Activated naive CD4-positive, alpha-beta T cell treated with anti-CD3 and anti-CD28 coated beads for 36 hours (primary cell): ENCODE measurements at regions of chr16 and their contacts with region 1.

Region 1: GRCh38 chr16:1826691-1827575 is at the starts of genes FAHD1 and HAGH:
- DNase-seq: peak; percentile 92
- H3K4me3 Mint-ChIP-seq: peak within 1 kb of the TSS; percentile 91
- H3K27ac Mint-ChIP-seq: peak within 1 kb of the TSS; percentile 78
- H3K4me1 Mint-ChIP-seq: peaks cover 50% of the 10 kb centered on the region
- H3K27me3 Mint-ChIP-seq: no peaks in the 10 kb centered on the region
- total RNA-seq, gene FAHD1: 6.0 to 7.3 TPM
- total RNA-seq, gene HAGH: 29.9 to 30.1 TPM

Region 2: DNA sequence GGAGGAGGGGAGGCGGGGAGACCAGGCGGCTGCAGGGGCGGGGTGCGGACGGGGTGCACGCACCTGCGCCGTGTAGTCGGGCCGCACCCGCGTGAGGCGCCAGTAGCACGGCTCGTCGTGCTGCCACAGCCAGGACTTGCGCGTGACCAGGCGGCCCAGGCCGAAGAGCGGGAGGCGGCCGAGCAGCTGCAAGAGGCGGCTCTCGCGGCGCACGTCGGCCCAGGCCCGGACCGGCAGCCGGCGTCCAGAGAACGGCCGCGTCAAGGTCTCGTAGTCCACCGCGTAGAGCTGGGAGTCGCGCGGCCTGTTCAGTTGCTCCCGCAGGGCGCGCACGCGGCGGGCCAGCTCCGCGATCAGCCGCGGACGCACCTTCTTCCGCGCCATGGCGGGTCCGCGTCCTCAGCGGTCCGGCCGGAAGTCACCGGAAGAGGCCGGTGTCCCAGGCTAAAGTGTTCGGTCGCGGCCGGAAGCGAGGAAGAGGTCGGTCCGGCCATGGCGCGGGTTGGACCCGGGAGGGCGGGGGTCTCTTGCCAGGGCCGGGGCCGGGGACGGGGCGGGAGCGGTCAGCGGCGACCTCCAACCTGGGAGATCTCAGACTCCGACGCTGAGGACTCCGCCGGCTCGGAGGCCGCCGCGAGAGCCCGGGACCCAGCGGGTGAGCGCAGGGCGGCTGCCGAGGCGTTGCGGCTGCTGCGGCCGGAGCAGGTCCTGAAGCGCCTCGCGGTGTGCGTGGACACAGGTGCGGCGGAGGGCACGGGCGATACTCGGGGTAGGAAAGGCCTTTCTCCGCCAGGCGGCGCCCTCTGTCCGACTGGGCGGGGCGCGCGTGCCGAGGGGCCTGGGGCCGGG is 54.0 kb before region 1 on chr16 and contains the starts of genes EME2 and MRPS34:
- CTCF ChIA-PET with region 1: no interaction called
- intact Hi-C with region 1: loop called (anchors 2 kb)
- DNase-seq: peak; percentile 85
- H3K4me3 Mint-ChIP-seq: peak within 1 kb of the TSS; percentile 93
- H3K27ac Mint-ChIP-seq: peak within 1 kb of the TSS; percentile 93
- H3K4me1 Mint-ChIP-seq: peaks cover 7% of the 10 kb centered on the region
- H3K27me3 Mint-ChIP-seq: no peaks in the 10 kb centered on the region
- total RNA-seq, gene EME2: 7.7 to 7.8 TPM
- total RNA-seq, gene MRPS34: 122 to 138 TPM